ENCODE measurements at regions of chr6 and their contacts with region 1.

Region 1: GRCh38 chr6:56902641-56903464 is 52.1 kb upstream of the BEND6 start:
- DNase-seq: peak in 3 of 5 donors; percentile 11 to 32 (median 19)
- ATAC-seq: peak in 2 of 4 donors; percentile 58 to 82
- H3K4me3 ChIP-seq: peak overlapping the region in 3 of 12 donors; percentile 11 to 24 (median 16)
- H3K27ac ChIP-seq: peak overlapping the region in 1 of 12 donors; percentile 17
- H3K4me1 ChIP-seq: peaks cover 0 to 7% (median 0%) of the 10 kb centered on the region in 12 donors
- H3K27me3 ChIP-seq: no peaks in the 10 kb centered on the region
- CTCF ChIP-seq: peak; percentile 59 to 81 (median 73)
- POLR2A ChIP-seq: no peak

Region 2: GRCh38 chr6:56955171-56956045 is 52.6 kb after region 1 on chr6:
- intact Hi-C with region 1: loop called in 3 of 10 experiments (anchors 5 to 10 kb)
- DNase-seq: peak; percentile 73 to 87 (median 79)
- ATAC-seq: peak; percentile 72 to 86 (median 82)
- H3K4me3 ChIP-seq: peak overlapping the region; percentile 30 to 85 (median 58)
- H3K27ac ChIP-seq: peak overlapping the region in 2 of 12 donors; percentile 31 to 57
- H3K4me1 ChIP-seq: peaks cover 0 to 22% (median 7%) of the 10 kb centered on the region in 12 donors
- H3K27me3 ChIP-seq: peaks cover 0 to 36% (median 0%) of the 10 kb centered on the region in 9 donors
- CTCF ChIP-seq: peak; percentile 46 to 80 (median 65)
- POLR2A ChIP-seq: no peak

Region 3: GRCh38 chr6:57021086-57021720 is 118.3 kb after region 1 on chr6:
- intact Hi-C with region 1: loop called (anchors 2 to 5 kb)
- DNase-seq: no peak
- ATAC-seq: peak in 1 of 4 donors; percentile 31
- H3K4me3 ChIP-seq: no peak overlapping the region
- H3K27ac ChIP-seq: no peak overlapping the region
- H3K4me1 ChIP-seq: no peaks in the 10 kb centered on the region
- H3K27me3 ChIP-seq: no peaks in the 10 kb centered on the region
- CTCF ChIP-seq: peak; percentile 35 to 70 (median 54)
- POLR2A ChIP-seq: no peak

Region 4: GRCh38 chr6:57040009-57040408 is 137.2 kb after region 1 on chr6:
- intact Hi-C with region 1: no loop called
- DNase-seq: no peak
- ATAC-seq: no peak
- H3K4me3 ChIP-seq: no peak overlapping the region
- H3K27ac ChIP-seq: no peak overlapping the region
- H3K4me1 ChIP-seq: no peaks in the 10 kb centered on the region
- H3K27me3 ChIP-seq: peaks cover 0 to 12% (median 0%) of the 10 kb centered on the region in 9 donors
- CTCF ChIP-seq: no peak
- POLR2A ChIP-seq: no peak

Region 5: DNA sequence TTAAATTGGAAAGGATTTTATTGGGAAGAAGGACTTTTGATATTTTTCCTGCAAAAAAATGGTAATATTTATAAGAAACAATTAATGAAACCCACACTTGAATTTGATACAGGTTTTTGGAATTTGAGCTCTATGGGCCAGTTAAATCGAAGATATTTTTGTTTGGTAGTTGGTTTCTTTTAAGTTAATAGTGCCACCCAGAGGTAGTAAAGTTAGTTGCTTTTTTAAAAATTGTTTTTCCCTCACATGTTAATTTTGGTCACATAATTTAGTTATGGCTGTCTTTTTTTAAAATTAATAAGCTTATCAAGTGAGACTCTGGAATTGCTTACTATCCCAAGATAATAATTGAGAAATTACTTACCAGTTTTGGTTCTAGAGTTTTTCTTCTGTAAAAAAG is 421.7 kb after region 1 on chr6:
- intact Hi-C with region 1: loop called in 6 of 10 experiments (anchors 1 to 5 kb)
- DNase-seq: no peak
- ATAC-seq: no peak
- H3K4me3 ChIP-seq: no peak overlapping the region
- H3K27ac ChIP-seq: no peak overlapping the region
- H3K4me1 ChIP-seq: no peaks in the 10 kb centered on the region
- H3K27me3 ChIP-seq: no peaks in the 10 kb centered on the region
- CTCF ChIP-seq: peak; percentile 8 to 58 (median 44)
- POLR2A ChIP-seq: no peak

Measured in heart left ventricle (tissue), 16 donors.